ENCODE measurements at regions of chr3 and their contacts with region 1.

Region 1: DNA sequence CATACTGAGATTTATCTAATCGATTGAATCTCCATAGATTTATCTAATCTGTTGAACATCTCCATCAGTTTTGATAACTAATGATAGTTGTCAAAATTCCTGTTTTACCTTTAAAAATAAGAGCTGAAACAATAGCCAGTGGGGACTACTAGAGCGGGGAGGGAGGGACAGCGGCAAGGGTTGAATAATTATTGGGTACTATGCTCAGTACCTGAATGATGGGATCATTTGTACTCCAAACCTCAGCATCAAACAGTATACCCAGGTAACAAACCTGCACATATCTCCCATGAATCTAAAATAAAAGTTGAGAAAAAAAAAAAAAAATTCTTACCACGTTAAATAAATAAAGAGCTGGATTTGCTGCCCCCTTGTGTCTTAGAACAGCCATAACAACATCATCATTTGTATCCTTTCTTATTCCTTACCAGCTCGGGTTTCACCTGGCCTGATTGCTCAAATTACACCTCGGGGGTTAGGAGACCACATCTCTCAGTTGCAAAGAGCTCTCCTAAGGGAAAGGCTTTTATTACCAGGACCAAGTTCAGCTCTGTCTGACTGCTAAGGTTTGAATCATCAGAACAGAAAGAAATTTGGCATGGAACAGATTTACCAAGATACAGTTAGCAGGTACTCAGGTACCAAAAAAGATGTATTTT is 25.7 kb upstream of the RPL39L start:
- DNase-seq: peak in 2 of 4 donors; percentile 37 to 72
- ATAC-seq: peak; percentile 88
- H3K4me3 ChIP-seq: no peak overlapping the region
- H3K27ac ChIP-seq: no peak overlapping the region
- H3K4me1 ChIP-seq: no peaks in the 10 kb centered on the region
- H3K27me3 ChIP-seq: no peaks in the 10 kb centered on the region
- CTCF ChIP-seq: peak; percentile 57 to 66

Region 2: GRCh38 chr3:186849374-186849975 is 315.5 kb before region 1 on chr3:
- intact Hi-C with region 1: loop called in 1 of 2 experiments (anchors 5 kb)
- DNase-seq: peak in 1 of 4 donors; percentile 36
- ATAC-seq: peak; percentile 87
- H3K4me3 ChIP-seq: no peak overlapping the region
- H3K27ac ChIP-seq: no peak overlapping the region
- H3K4me1 ChIP-seq: no peaks in the 10 kb centered on the region
- H3K27me3 ChIP-seq: peaks cover 0 to 23% of the 10 kb centered on the region in 2 donors
- CTCF ChIP-seq: peak; percentile 27 to 43

Region 3: GRCh38 chr3:186976837-186977750 is 187.9 kb before region 1 on chr3:
- intact Hi-C with region 1: no loop called
- DNase-seq: peak in 1 of 4 donors; percentile 19
- ATAC-seq: peak; percentile 57
- H3K4me3 ChIP-seq: no peak overlapping the region
- H3K27ac ChIP-seq: no peak overlapping the region
- H3K4me1 ChIP-seq: no peaks in the 10 kb centered on the region
- H3K27me3 ChIP-seq: no peaks in the 10 kb centered on the region
- CTCF ChIP-seq: no peak

Region 4: GRCh38 chr3:187112934-187113793 is 51.9 kb before region 1 on chr3:
- intact Hi-C with region 1: loop called in 1 of 2 experiments (anchors 10 kb)
- DNase-seq: no peak
- ATAC-seq: peak; percentile 44
- H3K4me3 ChIP-seq: no peak overlapping the region
- H3K27ac ChIP-seq: no peak overlapping the region
- H3K4me1 ChIP-seq: no peaks in the 10 kb centered on the region
- H3K27me3 ChIP-seq: no peaks in the 10 kb centered on the region
- CTCF ChIP-seq: peak; percentile 42 to 54

Measured in left lung (tissue), 14 donors.